ENCODE measurements at regions of chr17 and their contacts with region 1.

Region 1: DNA sequence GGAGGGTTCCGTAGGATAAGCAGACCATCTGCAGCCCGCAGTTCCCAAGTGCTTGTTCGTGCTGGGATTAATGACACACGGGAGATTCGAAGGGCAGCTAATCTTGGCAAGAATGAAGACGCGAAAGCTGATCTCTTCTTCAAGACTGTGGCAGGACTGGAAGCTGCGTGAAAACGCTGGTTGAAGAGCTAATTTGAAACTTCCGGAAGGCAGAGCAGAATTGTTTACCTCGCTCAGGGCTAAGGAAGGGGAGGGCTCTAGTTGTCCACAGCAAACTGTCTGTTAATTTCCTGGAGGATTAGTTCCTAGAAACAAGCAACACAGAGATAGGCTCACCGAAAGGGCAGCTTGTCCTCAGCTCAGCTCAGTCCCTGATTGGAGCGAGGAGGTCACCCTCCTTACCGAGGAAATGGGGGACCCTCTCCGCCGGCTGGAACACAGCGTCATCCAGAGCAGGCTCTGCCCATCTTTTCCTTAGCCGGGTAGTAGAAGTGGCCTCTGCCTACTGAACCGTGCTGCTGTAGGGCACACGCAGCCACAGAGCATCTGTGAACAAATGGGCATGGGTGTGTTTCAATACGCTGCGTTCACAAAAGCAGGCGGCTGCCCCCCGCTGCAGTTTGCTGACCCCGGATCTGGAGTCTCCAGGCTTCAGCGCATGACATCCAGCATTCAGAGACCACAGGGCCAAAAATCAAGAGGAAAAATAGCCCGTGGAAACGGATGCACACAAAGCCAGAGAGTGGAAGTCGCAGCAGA is 16.7 kb upstream of the BAIAP2 start:
- DNase-seq: peak; percentile 56
- H3K4me3 ChIP-seq: peak overlapping the region; percentile 4 to 19
- H3K27ac ChIP-seq: peak overlapping the region; percentile 80 to 83
- H3K4me1 ChIP-seq: no peaks in the 10 kb centered on the region
- H3K27me3 ChIP-seq: no peaks in the 10 kb centered on the region
- CTCF ChIP-seq: no peak
- POLR2A ChIP-seq: peak; percentile 26

Region 2: DNA sequence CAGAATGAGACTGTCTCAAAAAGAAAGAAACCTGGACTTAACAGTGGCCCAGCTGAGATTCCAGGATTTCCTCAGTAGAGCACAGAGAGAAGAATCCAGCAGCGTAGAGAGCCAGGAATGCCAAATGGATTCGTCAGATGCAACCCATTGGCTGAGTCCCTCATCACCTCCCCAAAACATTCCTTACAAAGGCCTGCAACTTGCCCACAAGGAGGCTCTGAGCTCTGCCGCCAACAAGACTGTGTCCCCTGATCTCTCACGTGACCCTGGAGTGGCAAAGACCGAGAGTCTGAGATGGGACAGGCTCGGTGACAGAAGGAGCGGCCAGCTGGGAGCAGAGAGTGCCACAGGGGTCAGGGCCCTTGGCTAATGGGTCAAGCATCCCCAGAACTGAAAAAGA is 33.5 kb before region 1 on chr17:
- intact Hi-C with region 1: loop called (anchors 5 kb)
- DNase-seq: no peak
- H3K4me3 ChIP-seq: no peak overlapping the region
- H3K27ac ChIP-seq: no peak overlapping the region
- H3K4me1 ChIP-seq: peaks cover 8% of the 10 kb centered on the region
- H3K27me3 ChIP-seq: no peaks in the 10 kb centered on the region
- CTCF ChIP-seq: no peak
- POLR2A ChIP-seq: no peak